Colonic mucosa (tissue), 4 donors: ENCODE measurements at regions of chr5 and their contacts with region 1.

Region 1: DNA sequence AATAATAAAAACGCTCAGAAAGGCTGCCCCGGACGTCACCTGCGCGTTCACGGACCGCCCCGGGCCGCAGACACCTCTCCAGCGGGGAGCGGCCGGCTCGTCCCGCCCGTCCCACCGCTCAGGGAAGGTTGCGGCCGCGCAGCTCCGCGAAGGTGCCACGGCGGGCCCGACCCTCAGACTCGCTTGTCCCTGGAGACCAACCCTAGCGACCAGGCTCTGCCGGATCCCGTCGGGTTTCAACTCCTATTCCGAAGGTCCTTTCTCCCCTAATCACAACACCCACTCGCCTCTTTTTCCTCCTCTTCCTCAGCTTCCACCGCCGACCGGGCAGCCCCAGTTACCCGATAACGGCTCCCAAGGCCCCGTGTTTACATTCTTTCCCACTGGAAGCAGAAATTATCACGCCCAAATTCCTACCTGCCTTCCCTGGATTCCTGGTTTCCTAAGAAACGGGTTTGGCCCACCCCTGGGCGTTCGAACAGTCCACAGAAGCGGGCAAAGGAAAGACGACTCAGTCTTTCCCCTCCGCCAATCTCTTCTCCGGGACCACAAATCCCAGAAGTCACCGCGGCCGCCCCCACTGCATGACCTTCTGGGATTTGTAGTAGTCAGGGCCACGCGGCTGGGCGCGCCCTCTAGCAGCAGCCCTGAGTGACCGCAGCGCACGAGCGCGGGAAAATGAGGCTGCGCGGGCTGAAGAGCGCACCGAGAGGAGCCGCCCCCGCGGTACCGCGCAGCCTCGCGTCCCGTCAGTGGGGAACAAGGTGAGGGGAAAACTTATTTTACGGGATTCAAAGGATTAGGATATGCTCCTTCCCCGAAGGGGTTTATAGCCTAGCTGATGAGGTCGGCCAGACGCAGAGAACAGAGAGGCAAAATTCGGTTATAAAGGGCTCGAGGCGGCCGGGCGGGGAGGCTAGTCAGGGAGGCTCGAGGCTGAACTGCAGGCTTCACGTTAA is at the start of gene TTC33:
- DNase-seq: peak; percentile 97
- H3K4me3 ChIP-seq: peak within 1 kb of the TSS; percentile 76
- H3K27ac ChIP-seq: peak within 1 kb of the TSS; percentile 88
- H3K4me1 ChIP-seq: peaks cover 7% of the 10 kb centered on the region
- H3K27me3 ChIP-seq: no peaks in the 10 kb centered on the region
- CTCF ChIP-seq: peak; percentile 58
- total RNA-seq, gene TTC33: 10.6 to 19.8 TPM

Region 2: DNA sequence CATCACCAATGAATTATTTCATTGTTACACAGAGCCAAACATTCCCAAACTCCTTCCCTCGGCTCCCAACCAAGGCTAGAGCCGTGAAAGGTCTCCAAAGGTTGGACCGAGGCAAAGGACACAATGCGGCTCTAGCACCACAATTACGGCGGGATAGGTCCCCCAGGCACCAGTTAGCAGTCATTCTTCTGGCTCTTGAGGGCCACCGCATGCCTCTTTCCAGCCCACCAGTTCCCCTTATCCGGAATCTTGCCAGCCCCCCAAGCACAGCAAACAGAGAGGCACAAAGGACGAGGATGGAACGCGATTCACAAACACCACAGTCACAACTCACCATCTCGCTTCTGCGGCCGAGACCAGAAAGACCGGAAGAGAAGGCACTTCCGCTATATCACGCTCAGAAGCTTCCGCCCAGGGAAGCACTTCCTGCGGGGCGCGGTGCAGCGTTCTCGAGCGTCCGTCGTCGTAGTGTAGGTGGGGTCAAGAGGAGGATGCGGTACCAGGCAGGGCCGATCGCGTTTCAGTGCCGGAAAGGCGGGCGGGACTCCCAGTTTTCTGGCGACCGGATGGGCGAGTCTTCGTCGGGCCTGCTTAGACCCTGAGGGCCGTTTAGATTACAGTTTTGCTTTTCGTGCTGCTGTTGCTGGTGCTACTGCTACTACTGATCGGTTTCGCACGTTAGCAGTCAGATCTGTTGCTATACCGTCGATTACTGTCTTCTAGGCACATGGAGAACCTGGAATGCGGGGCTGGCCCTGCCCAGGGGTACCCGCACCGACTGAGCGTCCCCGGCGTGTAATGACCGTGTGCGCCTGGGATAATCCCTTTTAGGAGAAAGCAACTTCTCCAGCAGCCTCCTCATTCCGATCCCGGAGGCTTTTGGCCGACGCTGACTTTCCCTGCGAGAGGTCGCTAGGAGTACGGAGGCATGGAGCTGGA is 79.4 kb after region 1 on chr5 and contains the start of gene RPL37:
- intact Hi-C with region 1: loop called (anchors 5 kb)
- DNase-seq: peak; percentile 95
- H3K4me3 ChIP-seq: peak within 1 kb of the TSS; percentile 68
- H3K27ac ChIP-seq: peak within 1 kb of the TSS; percentile 83
- H3K4me1 ChIP-seq: no peaks in the 10 kb centered on the region
- H3K27me3 ChIP-seq: no peaks in the 10 kb centered on the region
- CTCF ChIP-seq: no peak
- total RNA-seq, gene RPL37: 867 to 934 TPM

Region 3: GRCh38 chr5:40879163-40879942 is 123.7 kb after region 1 on chr5:
- intact Hi-C with region 1: loop called (anchors 5 kb)
- DNase-seq: no peak
- H3K4me3 ChIP-seq: no peak overlapping the region
- H3K27ac ChIP-seq: no peak overlapping the region
- H3K4me1 ChIP-seq: no peaks in the 10 kb centered on the region
- H3K27me3 ChIP-seq: no peaks in the 10 kb centered on the region
- CTCF ChIP-seq: peak; percentile 39